Naive thymus-derived CD4-positive, alpha-beta T cell (primary cell): ENCODE measurements at regions of chr2 and their contacts with region 1.

Region 1: GRCh38 chr2:131413148-131413747 is 49.3 kb upstream of the RAB6D start:
- DNase-seq: peak in 5 of 9 donors; percentile 36 to 48 (median 42)
- ATAC-seq: peak; percentile 75
- H3K4me3 ChIP-seq: no peak overlapping the region
- H3K4me3 Mint-ChIP-seq: no peak overlapping the region
- H3K27ac ChIP-seq: no peak overlapping the region
- H3K27ac Mint-ChIP-seq: no peak overlapping the region
- H3K4me1 ChIP-seq: no peaks in the 10 kb centered on the region
- H3K4me1 Mint-ChIP-seq: peaks cover 0 to 10% (median 0%) of the 10 kb centered on the region in 7 donors
- H3K27me3 ChIP-seq: peaks cover 0 to 3% of the 10 kb centered on the region in 2 donors
- H3K27me3 Mint-ChIP-seq: peaks cover 20 to 57% (median 44%) of the 10 kb centered on the region in 5 donors

Region 2: DNA sequence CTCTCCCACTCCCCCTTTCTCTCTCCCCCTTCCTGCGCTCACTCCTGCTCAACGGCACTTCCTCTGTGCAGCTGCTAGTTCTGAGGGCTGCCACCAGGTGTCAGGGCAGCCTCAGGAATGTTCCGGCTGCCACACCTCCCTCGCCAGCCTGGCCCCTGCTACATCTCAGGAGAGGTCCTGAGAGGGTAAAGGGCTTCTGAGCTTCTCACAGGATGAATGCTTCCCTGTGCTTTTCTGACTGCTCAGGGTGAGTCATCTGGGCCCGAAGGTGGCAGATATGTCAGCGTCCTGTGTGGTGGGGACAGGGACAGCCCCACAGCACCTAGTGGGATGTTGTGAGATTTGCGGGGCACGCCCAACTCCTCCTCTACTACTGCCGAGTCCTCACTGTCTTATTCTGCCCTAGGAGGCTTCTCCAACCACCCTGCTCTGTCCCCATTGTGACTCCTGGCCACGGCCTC is 259.1 kb before region 1 on chr2:
- CTCF ChIA-PET with region 1: no interaction called
- POLR2A ChIA-PET with region 1: no interaction called
- intact Hi-C with region 1: loop called in 1 of 2 experiments (anchors 5 kb)
- DNase-seq: peak; percentile 34 to 78 (median 55)
- ATAC-seq: peak; percentile 86
- H3K4me3 ChIP-seq: peak overlapping the region; percentile 11
- H3K4me3 Mint-ChIP-seq: peak overlapping the region in 3 of 10 donors; percentile 32 to 41 (median 33)
- H3K27ac ChIP-seq: no peak overlapping the region
- H3K27ac Mint-ChIP-seq: peak overlapping the region in 4 of 9 donors; percentile 0 to 46 (median 10)
- H3K4me1 ChIP-seq: no peaks in the 10 kb centered on the region
- H3K4me1 Mint-ChIP-seq: peaks cover 5 to 25% (median 16%) of the 10 kb centered on the region in 7 donors
- H3K27me3 ChIP-seq: no peaks in the 10 kb centered on the region
- H3K27me3 Mint-ChIP-seq: peaks cover 0 to 8% (median 0%) of the 10 kb centered on the region in 5 donors

Region 3: GRCh38 chr2:131402320-131403039 is 10.8 kb before region 1 on chr2:
- CTCF ChIA-PET with region 1: no interaction called
- POLR2A ChIA-PET with region 1: no interaction called
- intact Hi-C with region 1: no loop called
- DNase-seq: no peak
- ATAC-seq: no peak
- H3K4me3 ChIP-seq: no peak overlapping the region
- H3K4me3 Mint-ChIP-seq: no peak overlapping the region
- H3K27ac ChIP-seq: no peak overlapping the region
- H3K27ac Mint-ChIP-seq: no peak overlapping the region
- H3K4me1 ChIP-seq: no peaks in the 10 kb centered on the region
- H3K4me1 Mint-ChIP-seq: peaks cover 0 to 5% (median 0%) of the 10 kb centered on the region in 7 donors
- H3K27me3 ChIP-seq: no peaks in the 10 kb centered on the region
- H3K27me3 Mint-ChIP-seq: peaks cover 0 to 31% (median 26%) of the 10 kb centered on the region in 5 donors

Region 4: GRCh38 chr2:131521961-131522794 is 108.9 kb after region 1 on chr2:
- CTCF ChIA-PET with region 1: no interaction called
- POLR2A ChIA-PET with region 1: no interaction called
- intact Hi-C with region 1: loop called in 1 of 2 experiments (anchors 10 kb)
- DNase-seq: no peak
- ATAC-seq: no peak
- H3K4me3 ChIP-seq: no peak overlapping the region
- H3K4me3 Mint-ChIP-seq: no peak overlapping the region
- H3K27ac ChIP-seq: no peak overlapping the region
- H3K27ac Mint-ChIP-seq: peak overlapping the region in 1 of 9 donors; percentile 54
- H3K4me1 ChIP-seq: no peaks in the 10 kb centered on the region
- H3K4me1 Mint-ChIP-seq: peaks cover 0 to 7% (median 0%) of the 10 kb centered on the region in 7 donors
- H3K27me3 ChIP-seq: no peaks in the 10 kb centered on the region
- H3K27me3 Mint-ChIP-seq: no peaks in the 10 kb centered on the region

Region 5: GRCh38 chr2:131543371-131543891 is 130.2 kb after region 1 on chr2:
- CTCF ChIA-PET with region 1: no interaction called
- POLR2A ChIA-PET with region 1: no interaction called
- intact Hi-C with region 1: loop called in 1 of 2 experiments (anchors 10 kb)
- DNase-seq: no peak
- ATAC-seq: no peak
- H3K4me3 ChIP-seq: no peak overlapping the region
- H3K4me3 Mint-ChIP-seq: no peak overlapping the region
- H3K27ac ChIP-seq: no peak overlapping the region
- H3K27ac Mint-ChIP-seq: no peak overlapping the region
- H3K4me1 ChIP-seq: no peaks in the 10 kb centered on the region
- H3K4me1 Mint-ChIP-seq: peaks cover 0 to 2% (median 0%) of the 10 kb centered on the region in 7 donors
- H3K27me3 ChIP-seq: no peaks in the 10 kb centered on the region
- H3K27me3 Mint-ChIP-seq: peaks cover 0 to 17% (median 7%) of the 10 kb centered on the region in 5 donors

Region 6: GRCh38 chr2:131673392-131674173 is 260.3 kb after region 1 on chr2:
- CTCF ChIA-PET with region 1: interaction called, 8 read pairs
- POLR2A ChIA-PET with region 1: no interaction called
- intact Hi-C with region 1: loop called (anchors 1 kb)
- DNase-seq: peak in 8 of 9 donors; percentile 38 to 69 (median 47)
- ATAC-seq: peak; percentile 77
- H3K4me3 ChIP-seq: peak overlapping the region; percentile 47
- H3K4me3 Mint-ChIP-seq: peak overlapping the region; percentile 1 to 76 (median 72)
- H3K27ac ChIP-seq: no peak overlapping the region
- H3K27ac Mint-ChIP-seq: peak overlapping the region in 1 of 9 donors; percentile 67
- H3K4me1 ChIP-seq: peaks cover 2 to 6% of the 10 kb centered on the region in 2 donors
- H3K4me1 Mint-ChIP-seq: peaks cover 0 to 6% (median 4%) of the 10 kb centered on the region in 7 donors
- H3K27me3 ChIP-seq: no peaks in the 10 kb centered on the region
- H3K27me3 Mint-ChIP-seq: peaks cover 16 to 58% (median 31%) of the 10 kb centered on the region in 5 donors

Region 7: DNA sequence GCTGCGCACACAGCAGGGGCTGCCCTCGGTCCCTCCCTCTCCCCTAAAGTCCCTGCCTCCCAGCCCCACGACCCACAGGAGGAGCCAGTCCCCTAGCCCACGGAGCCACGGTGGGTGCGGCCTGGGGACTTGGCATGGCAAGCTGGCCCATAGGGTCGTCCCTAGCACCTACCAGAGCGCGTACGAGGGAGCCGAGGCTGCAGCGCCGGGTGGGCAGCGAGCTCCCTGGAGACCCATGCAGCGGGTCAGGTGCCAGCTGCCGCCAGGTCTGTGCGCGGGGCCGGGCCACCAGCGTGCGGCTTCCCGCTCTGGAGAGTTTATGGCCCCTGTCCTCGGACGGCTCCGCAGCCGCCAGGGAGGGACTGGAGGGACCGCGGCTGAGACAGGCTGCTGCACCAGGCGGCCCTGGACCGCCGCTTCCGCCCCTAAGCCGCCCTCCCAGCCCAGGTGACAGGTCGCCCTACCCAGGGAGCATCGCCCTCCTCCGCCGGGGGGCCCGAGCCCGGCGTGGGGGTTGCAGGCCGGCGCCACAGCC is 388.0 kb after region 1 on chr2:
- CTCF ChIA-PET with region 1: no interaction called
- POLR2A ChIA-PET with region 1: no interaction called
- intact Hi-C with region 1: loop called (anchors 1 to 10 kb)
- DNase-seq: peak in 2 of 9 donors; percentile 3 to 9
- ATAC-seq: no peak
- H3K4me3 ChIP-seq: no peak overlapping the region
- H3K4me3 Mint-ChIP-seq: peak overlapping the region in 3 of 10 donors; percentile 17 to 38 (median 19)
- H3K27ac ChIP-seq: no peak overlapping the region
- H3K27ac Mint-ChIP-seq: no peak overlapping the region
- H3K4me1 ChIP-seq: no peaks in the 10 kb centered on the region
- H3K4me1 Mint-ChIP-seq: peaks cover 0 to 9% (median 0%) of the 10 kb centered on the region in 7 donors
- H3K27me3 ChIP-seq: no peaks in the 10 kb centered on the region
- H3K27me3 Mint-ChIP-seq: peaks cover 7 to 19% (median 14%) of the 10 kb centered on the region in 5 donors